ENCODE measurements at regions of chr9 and their contacts with region 1.

Region 1: GRCh38 chr9:133742849-133743444 is 4.8 kb upstream of the SARDH start:
- DNase-seq: peak; percentile 95
- H3K4me3 ChIP-seq: no peak overlapping the region; a peak in 1 of 4 replicates
- H3K27ac ChIP-seq: no peak overlapping the region
- H3K4me1 ChIP-seq: peaks cover 3 to 21% of the 10 kb centered on the region in 2 experiments; a peak in 1 of 4 replicates
- H3K27me3 ChIP-seq: no peaks in the 10 kb centered on the region
- CTCF ChIP-seq: peak; percentile 92
- EP300 ChIP-seq: no peak
- RAD21 ChIP-seq: peak; percentile 75

Region 2: GRCh38 chr9:133048569-133048968 is 694.4 kb before region 1 on chr9:
- CTCF ChIA-PET with region 1: no interaction called
- POLR2A ChIA-PET with region 1: no interaction called
- DNase-seq: peak; percentile 58
- H3K4me3 ChIP-seq: no peak overlapping the region
- H3K27ac ChIP-seq: no peak overlapping the region
- H3K4me1 ChIP-seq: no peaks in the 10 kb centered on the region
- H3K27me3 ChIP-seq: no peaks in the 10 kb centered on the region
- CTCF ChIP-seq: peak; percentile 35; the same call in 1 of the 2 replicates
- EP300 ChIP-seq: no peak
- RAD21 ChIP-seq: peak; percentile 43

Region 3: DNA sequence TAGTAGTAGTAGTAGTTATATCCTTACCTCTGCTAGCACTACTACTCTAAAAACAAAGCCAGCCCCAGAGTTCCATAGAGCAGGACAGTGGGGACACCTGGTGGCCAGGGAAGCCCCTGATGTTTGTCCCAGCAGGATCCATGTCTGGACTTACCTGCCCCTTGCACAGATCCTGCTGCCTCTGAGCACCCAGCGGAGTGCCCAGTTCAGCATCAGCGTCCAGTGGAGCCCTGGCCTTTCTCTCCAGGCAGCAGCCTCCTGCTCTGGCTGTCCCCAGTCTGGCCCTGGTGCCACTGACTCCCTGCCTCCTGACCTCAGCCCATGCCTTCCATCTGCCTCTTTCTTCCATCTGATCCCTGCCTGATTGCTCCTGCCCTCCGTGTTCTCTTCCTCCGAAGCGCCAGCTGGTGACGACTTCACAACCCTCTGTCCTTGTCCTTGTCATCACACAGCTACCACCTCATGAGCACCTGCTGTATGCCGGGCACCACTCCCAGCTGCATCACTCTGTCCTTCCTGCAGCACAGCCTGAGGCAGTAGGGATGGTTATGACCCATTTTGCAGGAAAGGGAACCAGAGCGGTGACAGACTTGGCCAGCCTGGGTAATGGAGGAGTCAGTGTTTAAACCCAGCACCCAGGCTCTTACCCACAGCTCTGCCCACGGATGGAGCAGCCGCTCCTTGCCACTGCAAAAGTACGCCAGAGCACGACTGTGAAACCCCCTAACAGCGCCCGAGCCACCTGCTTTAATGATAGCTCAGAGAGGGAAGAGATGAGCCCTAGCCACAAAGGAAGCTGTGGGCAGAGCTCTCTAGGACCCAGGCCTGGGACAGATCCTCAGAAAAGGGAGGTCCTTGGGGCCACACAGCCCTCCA is 16.3 kb before region 1 on chr9:
- CTCF ChIA-PET with region 1: interaction called, 52 read pairs
- POLR2A ChIA-PET with region 1: no interaction called
- DNase-seq: peak; percentile 86
- H3K4me3 ChIP-seq: peak overlapping the region in 1 of 2 experiments; percentile 23; a peak in 1 of 4 replicates
- H3K27ac ChIP-seq: no peak overlapping the region
- H3K4me1 ChIP-seq: peaks cover 0 to 5% of the 10 kb centered on the region in 2 experiments; a peak in 1 of 4 replicates
- H3K27me3 ChIP-seq: no peaks in the 10 kb centered on the region
- CTCF ChIP-seq: peak; percentile 67
- EP300 ChIP-seq: no peak
- RAD21 ChIP-seq: peak; percentile 86

Region 4: GRCh38 chr9:133759146-133759900 is 16.4 kb after region 1 on chr9:
- CTCF ChIA-PET with region 1: interaction called, 35 read pairs
- POLR2A ChIA-PET with region 1: no interaction called
- DNase-seq: peak; percentile 76
- H3K4me3 ChIP-seq: no peak overlapping the region
- H3K27ac ChIP-seq: no peak overlapping the region
- H3K4me1 ChIP-seq: no peaks in the 10 kb centered on the region; a peak in 1 of 4 replicates
- H3K27me3 ChIP-seq: no peaks in the 10 kb centered on the region
- CTCF ChIP-seq: no peak
- EP300 ChIP-seq: no peak
- RAD21 ChIP-seq: no peak

Region 5: DNA sequence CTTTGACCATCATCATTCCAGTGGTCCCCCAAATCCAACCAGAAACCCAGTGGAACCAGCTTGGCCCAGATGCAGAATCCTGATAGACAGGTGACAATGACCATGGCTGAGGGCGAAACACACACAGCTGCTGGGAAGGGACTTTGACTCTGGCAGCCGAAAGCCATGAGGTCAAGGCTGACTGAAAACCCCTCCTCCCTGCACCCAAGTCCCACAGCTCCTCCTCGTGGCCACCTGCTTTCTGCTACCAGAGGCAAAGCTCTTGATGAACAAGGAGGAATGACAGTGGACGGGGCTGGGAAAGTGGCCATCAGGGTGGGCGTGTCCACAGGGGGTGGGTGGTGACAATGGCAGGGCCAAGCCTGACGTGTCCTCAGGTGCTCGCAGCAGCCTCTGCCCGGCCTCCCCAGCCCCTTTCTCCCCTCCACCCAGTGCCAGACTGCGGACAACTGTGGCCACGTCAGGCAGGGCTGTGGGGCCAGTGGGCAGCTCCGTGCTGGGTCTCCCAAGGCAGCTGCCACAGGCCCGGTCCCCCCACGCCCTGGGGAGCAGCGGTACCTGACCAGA is 26.0 kb after region 1 on chr9:
- CTCF ChIA-PET with region 1: interaction called, 30 read pairs
- POLR2A ChIA-PET with region 1: no interaction called
- DNase-seq: no peak
- H3K4me3 ChIP-seq: no peak overlapping the region
- H3K27ac ChIP-seq: no peak overlapping the region
- H3K4me1 ChIP-seq: peaks cover 0 to 8% of the 10 kb centered on the region in 2 experiments; a peak in 1 of 4 replicates
- H3K27me3 ChIP-seq: no peaks in the 10 kb centered on the region
- CTCF ChIP-seq: no peak
- EP300 ChIP-seq: no peak
- RAD21 ChIP-seq: 0 out of 2 replicates have a peak, but pooled peaks have one; percentile 3

Region 6: DNA sequence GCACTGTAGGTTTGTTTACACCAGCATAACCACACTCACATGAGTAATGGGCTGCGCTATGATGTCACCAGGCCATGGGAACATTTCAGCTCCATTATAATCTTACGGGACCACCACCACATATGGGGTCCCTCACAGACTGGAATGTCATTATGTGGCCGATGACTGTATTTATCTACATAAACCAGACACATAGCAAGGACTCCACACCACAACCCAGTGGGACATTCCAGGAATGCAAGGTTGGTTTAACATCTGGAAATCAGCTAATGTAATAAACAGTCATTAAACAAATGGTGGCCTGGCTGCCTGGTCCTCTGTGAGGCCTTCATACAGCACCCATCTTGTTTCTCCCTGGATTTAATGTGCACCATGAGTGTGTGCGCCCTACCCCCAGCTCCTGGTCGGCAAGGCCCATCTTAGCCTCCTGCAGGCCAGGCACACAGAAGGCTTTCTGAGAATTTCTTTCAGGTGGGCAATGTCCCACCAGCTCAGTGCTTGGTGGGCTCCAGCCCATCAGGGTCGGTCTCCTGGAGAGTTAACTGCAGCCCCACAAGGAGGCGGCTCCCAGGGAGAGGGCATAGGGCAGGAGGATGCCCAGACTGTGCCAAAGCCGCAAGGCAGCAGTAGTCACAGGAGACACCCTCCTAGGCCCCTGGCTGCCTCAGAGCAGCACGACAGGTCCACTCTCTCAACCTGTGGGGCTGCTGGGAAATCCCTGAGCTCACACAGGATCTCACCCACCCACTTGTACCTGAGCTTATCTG is 31.1 kb after region 1 on chr9:
- CTCF ChIA-PET with region 1: interaction called, 30 read pairs
- POLR2A ChIA-PET with region 1: no interaction called
- DNase-seq: peak; percentile 85
- H3K4me3 ChIP-seq: no peak overlapping the region; a peak in 1 of 4 replicates
- H3K27ac ChIP-seq: peak overlapping the region in 1 of 2 experiments; percentile 71; a peak in 2 of 4 replicates
- H3K4me1 ChIP-seq: peaks cover 0 to 19% of the 10 kb centered on the region in 2 experiments; a peak in 1 of 4 replicates
- H3K27me3 ChIP-seq: no peaks in the 10 kb centered on the region
- CTCF ChIP-seq: no peak
- EP300 ChIP-seq: peak in 1 of 2 experiments; percentile 77; a peak in 2 of 4 replicates
- RAD21 ChIP-seq: no peak

Region 7: GRCh38 chr9:133916159-133916541 is 173.2 kb after region 1 on chr9:
- CTCF ChIA-PET with region 1: no interaction called
- POLR2A ChIA-PET with region 1: no interaction called
- DNase-seq: no peak
- H3K4me3 ChIP-seq: no peak overlapping the region
- H3K27ac ChIP-seq: no peak overlapping the region
- H3K4me1 ChIP-seq: peaks cover 0 to 46% of the 10 kb centered on the region in 2 experiments; a peak in 1 of 4 replicates
- H3K27me3 ChIP-seq: no peaks in the 10 kb centered on the region
- CTCF ChIP-seq: no peak
- EP300 ChIP-seq: no peak
- RAD21 ChIP-seq: no peak

Measured in SK-N-SH (cell line).